ENCODE measurements at regions of chr10 and their contacts with region 1.

Region 1: DNA sequence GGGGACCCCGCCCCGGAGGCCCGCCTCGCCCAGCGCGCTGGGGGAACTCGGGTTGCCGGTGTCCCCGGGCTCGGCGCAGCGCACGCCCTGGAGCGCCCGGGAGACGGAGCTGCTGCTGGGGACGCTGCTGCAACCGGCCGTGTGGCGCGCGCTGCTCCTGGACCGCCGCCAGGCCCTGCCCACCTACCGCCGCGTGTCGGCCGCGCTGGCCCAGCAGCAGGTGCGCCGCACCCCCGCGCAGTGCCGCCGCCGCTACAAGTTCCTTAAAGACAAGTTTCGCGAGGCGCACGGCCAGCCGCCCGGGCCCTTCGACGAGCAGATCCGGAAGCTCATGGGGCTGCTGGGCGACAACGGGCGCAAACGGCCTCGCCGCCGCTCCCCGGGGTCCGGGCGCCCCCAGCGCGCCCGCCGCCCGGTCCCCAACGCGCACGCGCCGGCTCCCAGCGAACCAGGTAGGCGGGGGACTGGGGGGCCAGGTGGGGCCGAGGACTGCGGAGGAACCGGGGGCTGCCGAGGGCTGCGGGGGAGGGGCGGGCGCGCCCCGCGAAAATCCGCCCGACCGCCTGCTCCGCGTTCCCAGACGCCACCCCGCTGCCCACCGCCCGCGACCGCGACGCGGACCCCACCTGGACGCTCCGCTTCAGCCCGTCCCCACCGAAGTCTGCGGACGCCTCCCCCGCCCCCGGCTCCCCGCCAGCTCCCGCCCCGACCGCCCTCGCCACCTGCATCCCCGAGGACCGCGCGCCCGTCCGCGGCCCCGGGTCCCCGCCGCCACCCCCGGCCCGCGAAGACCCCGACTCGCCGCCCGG is 574 bp downstream of the UTF1 start:
- DNase-seq: no peak
- H3K4me3 Mint-ChIP-seq: no peak overlapping the region
- H3K27ac Mint-ChIP-seq: no peak overlapping the region
- H3K4me1 Mint-ChIP-seq: peaks cover 17% of the 10 kb centered on the region
- H3K27me3 Mint-ChIP-seq: peaks cover 52% of the 10 kb centered on the region

Region 2: DNA sequence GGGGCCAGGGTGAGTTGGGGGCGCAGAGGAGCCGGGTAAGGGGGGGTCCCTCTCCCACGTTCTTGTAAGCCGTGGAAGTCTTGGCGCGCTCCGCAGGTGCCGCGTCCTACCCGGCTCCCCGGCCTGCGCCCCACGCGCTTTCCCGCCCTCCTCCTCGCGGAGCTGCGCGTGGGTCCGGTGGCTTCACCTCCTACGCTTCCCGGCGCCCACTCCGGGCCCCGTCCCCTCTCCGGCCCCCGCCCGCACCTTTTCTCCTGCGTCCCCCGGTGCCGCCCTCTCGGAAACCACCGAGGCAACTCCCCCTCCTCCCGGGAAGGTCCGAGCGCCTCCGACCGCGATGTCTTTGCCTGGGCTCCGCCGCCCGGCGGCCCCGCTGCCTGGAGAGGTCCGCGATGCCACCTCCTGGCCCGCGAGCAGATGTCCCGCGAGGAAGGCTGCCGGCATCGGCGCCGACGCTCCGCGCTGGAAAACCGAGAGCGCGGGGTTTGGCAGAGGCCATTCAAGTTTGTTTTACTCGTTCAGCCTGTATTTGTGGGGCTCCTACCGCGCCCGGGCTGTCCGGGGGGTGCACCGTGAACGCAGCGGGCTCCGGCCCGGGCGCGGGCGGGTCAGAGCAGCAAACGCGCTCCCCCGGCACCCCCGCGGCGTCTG is 442.3 kb before region 1 on chr10:
- intact Hi-C with region 1: loop called (anchors 10 kb)
- DNase-seq: no peak
- H3K4me3 Mint-ChIP-seq: no peak overlapping the region
- H3K27ac Mint-ChIP-seq: no peak overlapping the region
- H3K4me1 Mint-ChIP-seq: no peaks in the 10 kb centered on the region
- H3K27me3 Mint-ChIP-seq: peaks cover 17% of the 10 kb centered on the region

Region 3: GRCh38 chr10:133013463-133013862 is 217.1 kb before region 1 on chr10:
- intact Hi-C with region 1: no loop called
- DNase-seq: no peak
- H3K4me3 Mint-ChIP-seq: no peak overlapping the region
- H3K27ac Mint-ChIP-seq: no peak overlapping the region
- H3K4me1 Mint-ChIP-seq: no peaks in the 10 kb centered on the region
- H3K27me3 Mint-ChIP-seq: no peaks in the 10 kb centered on the region

Region 4: GRCh38 chr10:133139551-133140065 is 91.0 kb before region 1 on chr10:
- intact Hi-C with region 1: loop called (anchors 10 kb)
- DNase-seq: no peak
- H3K4me3 Mint-ChIP-seq: no peak overlapping the region
- H3K27ac Mint-ChIP-seq: no peak overlapping the region
- H3K4me1 Mint-ChIP-seq: peaks cover 7% of the 10 kb centered on the region
- H3K27me3 Mint-ChIP-seq: peaks cover 4% of the 10 kb centered on the region

Region 5: GRCh38 chr10:133159950-133160819 is 70.4 kb before region 1 on chr10 and contains the start of gene KNDC1:
- intact Hi-C with region 1: loop called (anchors 5 kb)
- DNase-seq: no peak
- H3K4me3 Mint-ChIP-seq: no peak within 1 kb of the TSS
- H3K27ac Mint-ChIP-seq: no peak within 1 kb of the TSS
- H3K4me1 Mint-ChIP-seq: no peaks in the 10 kb centered on the region
- H3K27me3 Mint-ChIP-seq: peaks cover 1% of the 10 kb centered on the region
- total RNA-seq, gene KNDC1: 0.39 and 0.51 TPM in 2 replicates

Region 6: GRCh38 chr10:133241501-133242205 is 11.1 kb after region 1 on chr10:
- intact Hi-C with region 1: no loop called
- DNase-seq: no peak
- H3K4me3 Mint-ChIP-seq: peak overlapping the region; percentile 47
- H3K27ac Mint-ChIP-seq: no peak overlapping the region
- H3K4me1 Mint-ChIP-seq: peaks cover 10% of the 10 kb centered on the region
- H3K27me3 Mint-ChIP-seq: peaks cover 34% of the 10 kb centered on the region

Region 7: GRCh38 chr10:133257489-133258065 is 27.0 kb after region 1 on chr10:
- intact Hi-C with region 1: no loop called
- DNase-seq: no peak
- H3K4me3 Mint-ChIP-seq: peak overlapping the region; percentile 45
- H3K27ac Mint-ChIP-seq: peak overlapping the region; percentile 81
- H3K4me1 Mint-ChIP-seq: peaks cover 33% of the 10 kb centered on the region
- H3K27me3 Mint-ChIP-seq: no peaks in the 10 kb centered on the region

Region 8: DNA sequence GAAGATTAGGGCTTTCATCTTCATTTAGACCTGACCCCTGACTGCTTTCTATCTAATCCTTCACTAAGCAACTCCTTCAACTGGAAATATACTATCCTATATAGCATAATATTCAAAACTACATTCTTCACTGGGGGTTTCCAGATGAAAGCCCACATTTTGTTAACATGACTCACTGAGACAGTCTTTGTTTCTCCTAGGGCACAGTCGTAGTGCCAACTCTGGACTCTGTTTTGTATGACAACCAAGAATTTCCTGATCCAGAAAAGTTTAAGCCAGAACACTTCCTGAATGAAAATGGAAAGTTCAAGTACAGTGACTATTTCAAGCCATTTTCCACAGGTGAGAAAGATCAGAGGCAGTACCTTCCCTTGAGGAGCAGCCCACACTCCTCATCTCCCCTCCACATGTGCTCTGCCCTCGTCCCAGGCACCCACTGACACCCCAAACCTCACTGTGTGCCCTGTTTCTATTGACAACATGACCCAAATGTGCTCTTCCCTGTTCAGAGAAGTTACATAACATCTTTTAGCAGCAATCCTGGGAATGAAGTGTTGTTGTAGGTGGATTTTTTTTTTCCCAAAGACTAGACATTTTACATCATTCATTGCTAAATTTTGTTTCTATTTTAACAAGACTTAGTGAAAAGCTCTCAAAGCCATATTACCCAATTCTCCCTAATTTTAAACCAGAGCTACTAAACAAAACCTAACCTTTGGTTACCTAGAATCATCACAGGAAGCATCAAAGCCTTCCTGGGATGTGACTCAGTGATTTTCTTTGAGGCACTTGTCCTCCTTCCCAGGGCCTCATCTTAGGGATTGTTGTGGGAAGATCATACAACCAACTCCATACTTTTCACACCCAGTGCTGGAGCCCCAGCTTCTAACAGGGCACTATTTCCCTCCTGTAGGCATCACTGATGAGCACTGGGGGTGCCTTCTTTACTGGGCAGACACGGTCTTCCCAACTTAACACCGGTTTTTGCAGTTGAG is 307.3 kb after region 1 on chr10:
- intact Hi-C with region 1: loop called (anchors 10 kb)
- DNase-seq: no peak
- H3K4me3 Mint-ChIP-seq: no peak overlapping the region
- H3K27ac Mint-ChIP-seq: no peak overlapping the region
- H3K4me1 Mint-ChIP-seq: no peaks in the 10 kb centered on the region
- H3K27me3 Mint-ChIP-seq: peaks cover 1% of the 10 kb centered on the region